Common myeloid progenitor, CD34-positive (primary cell): ENCODE measurements at regions of chr7 and their contacts with region 1.

Region 1: GRCh38 chr7:6558837-6559236 is 7.6 kb upstream of the GRID2IP start:
- DNase-seq: peak; percentile 66 to 69 (median 66)
- H3K4me3 ChIP-seq: no peak overlapping the region
- H3K27ac ChIP-seq: no peak overlapping the region
- H3K4me1 ChIP-seq: no peaks in the 10 kb centered on the region
- H3K27me3 ChIP-seq: no peaks in the 10 kb centered on the region

Region 2: GRCh38 chr7:6536262-6537260 is 22.3 kb before region 1 on chr7:
- CTCF ChIA-PET with region 1: interaction called, 19 read pairs
- POLR2A ChIA-PET with region 1: interaction called, 6 read pairs
- DNase-seq: peak in 1 of 3 donors; percentile 47
- H3K4me3 ChIP-seq: peak overlapping the region in 5 of 7 experiments; percentile 32 to 74 (median 52)
- H3K27ac ChIP-seq: no peak overlapping the region
- H3K4me1 ChIP-seq: peaks cover 0 to 38% (median 21%) of the 10 kb centered on the region in 4 experiments
- H3K27me3 ChIP-seq: peaks cover 0 to 12% (median 0%) of the 10 kb centered on the region in 5 experiments

Region 3: GRCh38 chr7:6546498-6547251 is 12.2 kb before region 1 on chr7:
- CTCF ChIA-PET with region 1: interaction called, 31 read pairs
- POLR2A ChIA-PET with region 1: no interaction called
- DNase-seq: peak in 1 of 3 donors; percentile 37
- H3K4me3 ChIP-seq: no peak overlapping the region
- H3K27ac ChIP-seq: no peak overlapping the region
- H3K4me1 ChIP-seq: peaks cover 0 to 20% (median 18%) of the 10 kb centered on the region in 4 experiments
- H3K27me3 ChIP-seq: no peaks in the 10 kb centered on the region